ENCODE measurements at regions of chrX and their contacts with region 1.

Region 1: DNA sequence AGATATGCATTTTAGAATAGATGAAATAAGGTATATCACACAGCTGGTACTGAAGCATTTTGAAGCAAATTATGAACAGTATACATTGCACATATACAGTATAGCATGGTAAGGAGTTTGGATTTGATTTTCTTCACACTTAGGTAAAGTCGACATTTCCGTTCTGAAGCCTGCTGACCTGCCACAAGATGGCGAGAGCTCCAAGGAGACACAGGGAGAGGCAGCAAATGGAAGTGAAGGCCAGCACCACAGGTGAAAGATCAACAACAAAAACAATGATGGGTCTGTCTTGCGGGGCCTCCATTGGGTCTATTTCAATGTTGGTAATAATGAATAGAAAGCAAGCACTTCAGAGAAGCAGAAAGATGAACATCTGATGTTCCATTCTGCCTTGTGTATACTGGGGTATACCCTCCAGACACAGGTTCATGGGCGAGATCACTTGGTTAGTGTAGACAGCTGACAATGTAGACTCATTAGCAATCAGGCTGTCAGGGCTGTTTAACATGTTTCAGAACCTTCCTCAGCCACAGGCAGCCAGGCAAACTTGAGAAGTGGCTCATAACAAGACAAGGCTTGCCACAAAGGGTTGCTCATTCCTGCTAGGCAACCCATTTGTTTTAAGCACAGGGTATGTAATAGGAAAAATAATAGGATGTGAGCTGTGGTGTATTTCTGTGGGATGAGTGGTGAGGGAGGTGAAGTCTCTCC is 21.4 kb upstream of the NOX1 start:
- DNase-seq: peak; percentile 49
- H3K4me3 Mint-ChIP-seq: no peak overlapping the region
- H3K27ac Mint-ChIP-seq: no peak overlapping the region
- H3K4me1 Mint-ChIP-seq: no peaks in the 10 kb centered on the region
- H3K27me3 Mint-ChIP-seq: no peaks in the 10 kb centered on the region
- CTCF ChIP-seq: peak; percentile 18

Region 2: DNA sequence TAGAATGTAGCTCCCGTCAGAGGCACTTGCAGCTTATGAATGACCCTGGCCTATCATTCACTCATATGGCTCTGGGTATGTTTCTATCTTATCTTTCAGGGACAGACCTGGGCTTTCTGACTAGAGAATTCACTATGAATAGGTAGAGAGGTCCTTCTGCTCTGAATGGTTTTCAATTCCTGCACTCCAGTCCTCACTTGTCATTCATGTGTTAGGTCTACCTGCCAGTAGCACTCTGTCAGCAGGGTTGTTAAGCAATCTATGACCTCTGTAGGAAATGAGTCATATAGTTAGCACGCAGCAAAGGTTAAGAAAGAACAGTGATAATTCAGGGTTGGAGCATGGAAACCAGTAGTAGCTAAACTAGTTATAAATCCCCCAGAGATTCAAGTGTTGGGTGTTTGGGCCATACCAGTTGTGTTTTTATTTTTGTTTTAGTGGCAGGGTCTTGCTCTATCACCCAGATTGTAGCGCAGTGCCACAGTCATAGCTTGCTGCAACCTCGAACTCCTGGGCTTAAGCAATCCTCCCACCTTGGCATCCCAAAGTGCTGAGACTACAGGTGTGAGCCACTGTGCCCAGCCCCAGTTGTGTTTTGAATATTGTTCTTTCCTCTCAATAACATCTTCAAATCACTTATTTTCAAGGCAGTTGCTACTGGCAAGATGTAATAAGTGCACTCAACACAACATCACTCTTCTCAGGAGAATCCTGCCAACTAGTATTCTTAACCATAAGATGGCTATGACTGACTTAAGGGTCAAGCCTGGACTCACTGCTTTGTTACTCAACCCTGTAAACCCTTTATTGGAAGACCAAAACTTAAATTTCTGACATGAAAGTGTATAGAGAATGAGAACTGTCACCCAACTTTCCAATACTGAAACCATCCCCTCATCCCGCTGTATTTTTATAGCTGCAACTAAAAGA is 99.1 kb after region 1 on chrX:
- CTCF ChIA-PET with region 1: no interaction called
- intact Hi-C with region 1: loop called (anchors 10 kb)
- DNase-seq: peak; percentile 22
- H3K4me3 Mint-ChIP-seq: peak overlapping the region; percentile 33
- H3K27ac Mint-ChIP-seq: peak overlapping the region; percentile 56
- H3K4me1 Mint-ChIP-seq: peaks cover 25% of the 10 kb centered on the region
- H3K27me3 Mint-ChIP-seq: no peaks in the 10 kb centered on the region
- CTCF ChIP-seq: no peak

Region 3: DNA sequence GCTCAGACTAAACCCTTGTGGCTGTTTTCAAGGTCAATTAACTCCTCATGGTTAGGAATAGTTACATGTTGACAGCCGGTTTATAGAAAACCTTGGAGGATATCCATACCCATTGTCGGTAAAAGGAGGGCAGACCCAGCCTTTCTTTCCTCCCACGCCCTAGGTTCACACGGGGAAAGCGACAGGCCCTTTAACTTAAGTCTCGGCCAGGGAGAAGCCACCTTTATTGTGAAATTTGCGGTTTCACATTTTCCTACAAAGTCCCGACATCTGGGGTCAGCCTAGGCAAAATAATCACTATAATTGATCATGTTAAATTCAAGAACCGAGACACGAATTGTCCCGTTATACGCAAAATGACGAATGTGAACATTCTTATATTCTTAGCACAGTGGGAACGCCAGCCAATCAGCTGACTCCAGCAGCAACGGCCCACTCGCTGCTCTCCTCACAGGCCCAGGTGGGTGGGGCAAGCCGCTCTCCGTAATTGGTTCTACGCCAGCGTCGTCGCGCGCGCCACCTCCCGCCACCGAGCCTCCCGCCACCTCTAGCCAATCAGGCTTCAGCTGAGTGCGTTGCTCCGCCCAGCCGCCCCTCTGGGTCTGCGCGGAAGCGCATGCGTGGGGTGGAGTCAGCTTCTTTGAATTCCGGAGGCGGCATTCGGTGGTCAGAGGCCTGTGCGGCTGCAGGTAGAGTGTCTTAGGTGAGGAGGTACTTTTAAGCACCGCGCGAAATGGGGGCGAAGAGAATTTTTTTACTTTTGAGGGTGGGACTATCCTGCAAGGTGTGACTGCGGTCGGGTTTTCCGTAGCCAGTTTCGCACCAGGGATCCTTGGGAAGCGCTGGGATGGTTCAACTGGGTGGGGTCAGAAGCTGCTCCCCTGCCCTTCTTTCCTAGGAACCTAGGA is 202.3 kb after region 1 on chrX and contains the start of gene CENPI:
- CTCF ChIA-PET with region 1: interaction called, 3 read pairs
- intact Hi-C with region 1: loop called (anchors 10 kb)
- DNase-seq: peak; percentile 95
- H3K4me3 Mint-ChIP-seq: peak within 1 kb of the TSS; percentile 77
- H3K27ac Mint-ChIP-seq: peak within 1 kb of the TSS; percentile 43
- H3K4me1 Mint-ChIP-seq: peaks cover 20% of the 10 kb centered on the region
- H3K27me3 Mint-ChIP-seq: no peaks in the 10 kb centered on the region
- CTCF ChIP-seq: no peak
- total RNA-seq, gene CENPI: 26.1 and 28.1 TPM in 2 replicates

Region 4: GRCh38 chrX:101206471-101206870 is 311.0 kb after region 1 on chrX:
- CTCF ChIA-PET with region 1: no interaction called
- intact Hi-C with region 1: loop called (anchors 1 kb)
- DNase-seq: no peak
- H3K4me3 Mint-ChIP-seq: no peak overlapping the region
- H3K27ac Mint-ChIP-seq: no peak overlapping the region
- H3K4me1 Mint-ChIP-seq: no peaks in the 10 kb centered on the region
- H3K27me3 Mint-ChIP-seq: no peaks in the 10 kb centered on the region
- CTCF ChIP-seq: no peak

Region 5: DNA sequence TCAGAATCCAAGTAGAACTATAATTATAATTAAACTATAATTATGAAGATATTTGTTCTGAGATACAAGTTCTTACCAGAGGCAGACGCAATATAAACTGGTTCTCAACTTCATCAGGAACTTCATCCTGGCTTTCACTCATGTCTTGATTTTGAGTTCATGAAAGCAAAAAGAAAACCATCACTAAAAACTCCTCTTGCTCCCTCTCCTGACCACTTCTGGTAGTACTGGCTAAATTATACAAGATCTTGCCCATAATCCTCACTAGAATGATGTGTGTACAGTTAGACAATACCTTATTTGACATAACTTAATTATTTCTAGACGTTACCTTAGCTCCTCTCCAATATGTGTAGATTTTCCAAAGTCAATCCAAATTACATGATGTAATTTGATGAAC is 391.9 kb after region 1 on chrX:
- CTCF ChIA-PET with region 1: no interaction called
- intact Hi-C with region 1: loop called (anchors 2 kb)
- DNase-seq: peak; percentile 33
- H3K4me3 Mint-ChIP-seq: no peak overlapping the region
- H3K27ac Mint-ChIP-seq: no peak overlapping the region
- H3K4me1 Mint-ChIP-seq: no peaks in the 10 kb centered on the region
- H3K27me3 Mint-ChIP-seq: no peaks in the 10 kb centered on the region
- CTCF ChIP-seq: no peak

Measured in Calu3 (cell line).